ENCODE measurements at regions of chr13 and their contacts with region 1.

Region 1: DNA sequence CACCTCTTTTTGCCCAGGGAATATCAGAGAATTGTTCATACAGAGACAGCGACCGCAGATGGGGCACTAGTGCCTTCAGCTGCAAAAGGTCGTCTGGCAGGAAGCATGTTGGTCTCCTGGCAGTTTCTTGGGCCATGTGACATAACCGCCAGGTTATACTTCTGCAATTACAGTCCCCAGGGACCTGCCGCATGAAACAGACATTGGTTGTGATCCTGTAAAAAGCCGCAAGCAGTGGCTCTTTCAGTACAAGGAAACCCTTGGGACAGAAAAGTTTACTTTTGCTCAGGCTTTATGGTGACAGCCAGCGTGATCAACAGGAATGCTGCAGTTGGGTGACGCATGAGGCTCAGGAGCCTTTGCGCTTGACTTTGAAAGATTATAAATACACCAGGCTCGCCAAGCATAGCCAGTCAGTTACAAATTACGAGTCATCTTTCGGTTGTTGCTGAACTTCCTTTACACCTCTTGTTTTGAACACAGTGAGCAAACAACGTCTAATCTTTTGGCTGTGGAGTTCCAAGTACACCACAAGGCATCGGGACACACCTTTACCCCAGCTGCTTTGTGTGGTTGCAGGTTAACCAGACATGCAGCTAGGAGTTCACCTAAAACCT is 50.5 kb upstream of the UBE2L5 start:
- DNase-seq: peak; percentile 100
- H3K4me3 ChIP-seq: peak overlapping the region; percentile 80
- H3K27ac ChIP-seq: peak overlapping the region; percentile 97
- H3K4me1 ChIP-seq: peaks cover 65% of the 10 kb centered on the region
- CTCF ChIP-seq: peak; percentile 57

Region 2: DNA sequence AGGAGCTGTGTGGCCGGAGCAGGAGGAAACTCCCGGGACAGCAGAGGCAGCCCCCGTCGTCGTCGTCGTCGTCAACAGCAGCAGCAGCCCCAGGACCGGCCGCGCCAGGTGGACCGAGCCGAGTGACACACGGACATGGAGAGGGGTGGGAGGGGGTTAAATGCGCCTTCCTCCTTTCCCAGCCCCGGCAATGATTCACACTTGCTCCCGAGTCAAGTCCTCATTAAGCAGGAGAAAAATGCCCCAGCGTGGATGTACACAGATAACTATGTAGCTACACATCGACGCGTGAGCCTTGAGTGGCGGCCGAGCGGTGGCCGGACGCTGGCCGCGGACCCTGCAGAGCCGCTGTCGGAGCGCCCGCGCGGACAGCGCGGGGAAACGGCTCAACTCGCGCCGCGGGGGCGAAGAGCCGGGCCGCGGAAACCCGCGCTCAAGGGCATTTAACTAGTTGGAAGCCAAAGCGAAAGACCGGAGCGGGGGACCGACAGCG is 522.0 kb before region 1 on chr13:
- CTCF ChIA-PET with region 1: no interaction called
- POLR2A ChIA-PET with region 1: no interaction called
- intact Hi-C with region 1: no loop called
- DNase-seq: no peak
- H3K4me3 ChIP-seq: peak overlapping the region; percentile 86
- H3K27ac ChIP-seq: peak overlapping the region; percentile 24
- H3K4me1 ChIP-seq: peaks cover 16% of the 10 kb centered on the region
- CTCF ChIP-seq: no peak

Region 3: GRCh38 chr13:30172593-30173302 is 199.0 kb before region 1 on chr13:
- CTCF ChIA-PET with region 1: no interaction called
- POLR2A ChIA-PET with region 1: no interaction called
- intact Hi-C with region 1: no loop called
- DNase-seq: no peak
- H3K4me3 ChIP-seq: no peak overlapping the region
- H3K27ac ChIP-seq: no peak overlapping the region
- H3K4me1 ChIP-seq: no peaks in the 10 kb centered on the region
- CTCF ChIP-seq: no peak

Region 4: DNA sequence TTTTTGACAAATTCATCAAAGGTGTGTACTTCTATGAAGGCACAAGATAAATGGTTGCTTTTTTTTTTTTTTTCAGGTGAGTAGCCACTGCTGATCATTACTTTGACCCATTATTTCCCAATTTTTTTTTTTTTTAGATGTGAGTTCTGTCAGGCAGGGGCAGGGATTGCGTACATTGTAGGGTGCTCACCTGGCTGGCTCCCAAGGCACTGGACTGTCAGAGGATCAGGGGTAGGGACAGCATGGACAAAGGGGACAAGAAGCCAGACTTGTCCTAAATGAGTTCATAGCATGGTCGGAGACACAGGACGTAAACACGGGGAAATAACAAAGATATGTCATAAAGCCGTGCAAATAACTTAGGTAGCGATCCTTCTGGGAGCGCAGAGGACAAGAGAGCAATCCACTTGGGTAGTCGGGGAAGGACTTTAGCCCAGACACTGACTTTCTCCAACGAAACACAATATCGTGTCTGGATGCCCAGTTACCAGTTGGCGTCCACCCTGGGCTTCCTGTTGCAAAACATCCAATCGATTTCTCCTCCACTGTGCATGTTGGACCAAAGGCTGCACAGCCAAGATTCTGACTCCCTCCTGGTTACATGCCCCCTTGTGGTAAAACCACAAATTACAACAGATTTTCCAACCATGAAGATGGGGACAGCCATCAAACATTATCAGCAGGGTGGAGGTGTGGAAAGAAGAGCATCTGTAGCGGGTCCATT is 36.9 kb before region 1 on chr13:
- CTCF ChIA-PET with region 1: no interaction called
- POLR2A ChIA-PET with region 1: interaction called, 46 read pairs
- intact Hi-C with region 1: loop called (anchors 2 kb)
- DNase-seq: peak; percentile 60
- H3K4me3 ChIP-seq: peak overlapping the region; percentile 58
- H3K27ac ChIP-seq: peak overlapping the region; percentile 98
- H3K4me1 ChIP-seq: peaks cover 80% of the 10 kb centered on the region
- CTCF ChIP-seq: peak; percentile 85

Region 5: GRCh38 chr13:30395192-30396084 is 23.7 kb after region 1 on chr13:
- CTCF ChIA-PET with region 1: interaction called, 15 read pairs
- POLR2A ChIA-PET with region 1: interaction called, 67 read pairs
- intact Hi-C with region 1: loop called (anchors 1 kb)
- DNase-seq: peak; percentile 91
- H3K4me3 ChIP-seq: peak overlapping the region; percentile 68
- H3K27ac ChIP-seq: peak overlapping the region; percentile 74
- H3K4me1 ChIP-seq: peaks cover 25% of the 10 kb centered on the region
- CTCF ChIP-seq: no peak

Region 6: GRCh38 chr13:30429721-30430694 is 58.3 kb after region 1 on chr13:
- CTCF ChIA-PET with region 1: interaction called, 5 read pairs
- POLR2A ChIA-PET with region 1: interaction called, 49 read pairs
- intact Hi-C with region 1: no loop called
- DNase-seq: no peak
- H3K4me3 ChIP-seq: peak overlapping the region; percentile 57
- H3K27ac ChIP-seq: peak overlapping the region; percentile 83
- H3K4me1 ChIP-seq: peaks cover 67% of the 10 kb centered on the region
- CTCF ChIP-seq: no peak

Region 7: GRCh38 chr13:30465585-30466357 is 94.0 kb after region 1 on chr13 and contains the start of gene HMGB1:
- CTCF ChIA-PET with region 1: interaction called, 4 read pairs
- POLR2A ChIA-PET with region 1: interaction called, 12 read pairs
- intact Hi-C with region 1: loop called (anchors 1 kb)
- DNase-seq: peak; percentile 100
- H3K4me3 ChIP-seq: peak within 1 kb of the TSS; percentile 99
- H3K27ac ChIP-seq: peak within 1 kb of the TSS; percentile 93
- H3K4me1 ChIP-seq: peaks cover 44% of the 10 kb centered on the region
- CTCF ChIP-seq: no peak
- total RNA-seq, gene HMGB1: 1,288 and 1,675 TPM in 2 replicates